ENCODE measurements at regions of chr9 and their contacts with region 1.

Region 1: GRCh38 chr9:113657703-113658544 is 194.4 kb downstream of the RGS3 start:
- DNase-seq: peak; percentile 83 to 88
- H3K4me3 ChIP-seq: no peak overlapping the region
- H3K27ac ChIP-seq: no peak overlapping the region
- H3K4me1 ChIP-seq: peaks cover 0 to 6% of the 10 kb centered on the region in 2 donors
- H3K27me3 ChIP-seq: no peaks in the 10 kb centered on the region
- CTCF ChIP-seq: peak; percentile 92 to 98 (median 95)
- POLR2A ChIP-seq: no peak

Region 2: GRCh38 chr9:113591001-113591898 is 66.7 kb before region 1 on chr9:
- intact Hi-C with region 1: loop called (anchors 1 kb)
- DNase-seq: peak; percentile 86 to 88
- H3K4me3 ChIP-seq: no peak overlapping the region
- H3K27ac ChIP-seq: peak overlapping the region in 1 of 2 donors; percentile 17
- H3K4me1 ChIP-seq: peaks cover 0 to 9% of the 10 kb centered on the region in 2 donors
- H3K27me3 ChIP-seq: no peaks in the 10 kb centered on the region
- CTCF ChIP-seq: peak; percentile 90 to 97 (median 95)
- POLR2A ChIP-seq: no peak

Region 3: GRCh38 chr9:113720495-113720894 is 62.6 kb after region 1 on chr9:
- intact Hi-C with region 1: no loop called
- DNase-seq: no peak
- H3K4me3 ChIP-seq: no peak overlapping the region
- H3K27ac ChIP-seq: no peak overlapping the region
- H3K4me1 ChIP-seq: no peaks in the 10 kb centered on the region
- H3K27me3 ChIP-seq: no peaks in the 10 kb centered on the region
- CTCF ChIP-seq: no peak
- POLR2A ChIP-seq: no peak